Posterior cingulate gyrus (tissue), 11 donors: ENCODE measurements at regions of chr6 and their contacts with region 1.

Region 1: GRCh38 chr6:31366693-31367470 is 9.9 kb upstream of the HLA-B start:
- DNase-seq: peak; percentile 71 to 98 (median 93)

Region 2: GRCh38 chr6:31139599-31139998 is 227.3 kb before region 1 on chr6:
- intact Hi-C with region 1: loop called (anchors 1 kb)
- DNase-seq: no peak

Region 3: GRCh38 chr6:31243508-31243907 is 123.4 kb before region 1 on chr6:
- intact Hi-C with region 1: no loop called
- DNase-seq: no peak

Region 4: GRCh38 chr6:31271641-31272357 is 95.1 kb before region 1 on chr6 and contains the start of gene HLA-C:
- intact Hi-C with region 1: loop called (anchors 1 kb)
- DNase-seq: peak; percentile 68 to 99 (median 90)